HCT116 (cell line): ENCODE measurements at regions of chr2 and their contacts with region 1.

Region 1: DNA sequence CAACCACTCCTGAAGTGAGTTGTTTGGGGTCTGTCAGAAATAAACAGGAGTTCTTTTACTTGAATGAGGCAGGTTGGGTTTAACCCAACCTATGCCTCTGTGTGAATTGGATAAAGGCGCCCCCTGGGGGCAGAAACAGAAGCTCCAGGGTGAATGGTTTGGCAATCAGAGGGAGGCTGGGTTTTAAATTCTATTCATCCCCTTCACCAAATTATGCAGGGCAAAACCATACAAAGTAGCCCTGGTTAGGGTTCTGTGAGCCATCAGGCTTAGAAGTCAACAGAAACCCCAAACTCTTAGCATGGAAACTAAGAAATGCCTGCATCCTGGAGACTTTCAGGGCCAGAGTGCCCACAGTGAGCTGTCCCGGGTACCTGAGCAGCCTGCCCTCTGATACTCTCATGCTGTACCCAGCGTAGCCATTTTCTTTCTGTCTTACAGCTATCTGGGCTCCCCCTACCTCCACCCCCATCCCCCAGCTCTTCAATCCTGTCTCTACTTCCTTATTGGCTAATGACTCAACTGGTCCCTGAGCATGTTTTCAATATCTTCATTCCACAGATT is 241.5 kb downstream of the ICOS start:
- DNase-seq: peak; percentile 19
- ATAC-seq: peak; percentile 91
- H3K4me3 ChIP-seq: no peak overlapping the region
- H3K27ac ChIP-seq: no peak overlapping the region
- H3K4me1 ChIP-seq: no peaks in the 10 kb centered on the region
- H3K27me3 ChIP-seq: no peaks in the 10 kb centered on the region
- CTCF ChIP-seq: peak; percentile 51 to 80 (median 79); a peak in 5 of 6 replicates
- POLR2A ChIP-seq: no peak
- RAD21 ChIP-seq: peak; percentile 50

Region 2: GRCh38 chr2:204024503-204024902 is 153.6 kb before region 1 on chr2:
- CTCF ChIA-PET with region 1: interaction called, 4 read pairs
- POLR2A ChIA-PET with region 1: no interaction called
- RAD21 ChIA-PET with region 1: no interaction called
- intact Hi-C with region 1: loop called (anchors 1 kb)
- DNase-seq: peak; percentile 19
- ATAC-seq: peak; percentile 72
- H3K4me3 ChIP-seq: no peak overlapping the region
- H3K27ac ChIP-seq: no peak overlapping the region
- H3K4me1 ChIP-seq: no peaks in the 10 kb centered on the region
- H3K27me3 ChIP-seq: no peaks in the 10 kb centered on the region
- CTCF ChIP-seq: peak; percentile 50 to 67 (median 63); a peak in 5 of 6 replicates
- POLR2A ChIP-seq: no peak
- RAD21 ChIP-seq: peak; percentile 67

Region 3: GRCh38 chr2:204145263-204145751 is 32.8 kb before region 1 on chr2:
- CTCF ChIA-PET with region 1: interaction called, 19 read pairs
- POLR2A ChIA-PET with region 1: no interaction called
- RAD21 ChIA-PET with region 1: no interaction called
- intact Hi-C with region 1: loop called (anchors 1 kb)
- DNase-seq: peak; percentile 60
- ATAC-seq: peak; percentile 100
- H3K4me3 ChIP-seq: no peak overlapping the region
- H3K27ac ChIP-seq: no peak overlapping the region
- H3K4me1 ChIP-seq: no peaks in the 10 kb centered on the region
- H3K27me3 ChIP-seq: peaks cover 4% of the 10 kb centered on the region; the same call in 1 of the 2 replicates
- CTCF ChIP-seq: peak; percentile 73 to 98 (median 90)
- POLR2A ChIP-seq: no peak
- RAD21 ChIP-seq: peak; percentile 91